AG04449 (cell line): ENCODE measurements at regions of chr19 and their contacts with region 1.

Region 1: DNA sequence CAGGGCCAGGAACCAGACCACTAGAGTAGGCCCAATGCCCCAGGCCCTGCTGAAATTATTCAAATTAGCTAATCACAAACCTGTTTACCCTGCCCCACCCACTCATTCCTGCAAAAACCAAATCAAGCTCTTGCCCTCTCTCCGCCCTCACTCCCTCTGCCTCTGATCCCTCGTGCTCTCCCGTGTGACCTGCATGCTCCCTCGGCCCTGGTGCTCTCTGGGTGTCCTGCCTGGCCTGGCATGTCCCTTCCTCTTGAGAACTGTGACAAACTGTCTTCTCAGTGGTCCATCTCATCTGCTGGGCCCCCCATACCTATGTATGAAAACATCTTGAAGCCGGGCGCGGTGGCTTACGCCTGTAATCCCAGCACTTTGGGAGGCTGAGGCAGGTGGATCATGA is 12.2 kb upstream of the TTYH1 start:
- DNase-seq: no peak
- H3K4me3 ChIP-seq: no peak overlapping the region
- CTCF ChIP-seq: no peak

Region 2: GRCh38 chr19:54390942-54391577 is 12.0 kb before region 1 on chr19:
- CTCF ChIA-PET with region 1: interaction called, 15 read pairs
- POLR2A ChIA-PET with region 1: no interaction called
- DNase-seq: peak; percentile 4
- H3K4me3 ChIP-seq: no peak overlapping the region
- CTCF ChIP-seq: peak; percentile 69

Region 3: GRCh38 chr19:54420383-54421168 is 17.5 kb after region 1 on chr19:
- CTCF ChIA-PET with region 1: no interaction called
- POLR2A ChIA-PET with region 1: no interaction called
- DNase-seq: no peak
- H3K4me3 ChIP-seq: no peak overlapping the region
- CTCF ChIP-seq: no peak